Mammary epithelial cell (primary cell): ENCODE measurements at regions of chr7 and their contacts with region 1.

Region 1: GRCh38 chr7:16695621-16696237 is 49.7 kb downstream of the BZW2 start:
- DNase-seq: peak; percentile 47
- H3K4me3 ChIP-seq: no peak overlapping the region
- H3K27ac ChIP-seq: no peak overlapping the region
- H3K4me1 ChIP-seq: no peaks in the 10 kb centered on the region
- H3K27me3 ChIP-seq: no peaks in the 10 kb centered on the region
- CTCF ChIP-seq: peak; percentile 66 to 67

Region 2: DNA sequence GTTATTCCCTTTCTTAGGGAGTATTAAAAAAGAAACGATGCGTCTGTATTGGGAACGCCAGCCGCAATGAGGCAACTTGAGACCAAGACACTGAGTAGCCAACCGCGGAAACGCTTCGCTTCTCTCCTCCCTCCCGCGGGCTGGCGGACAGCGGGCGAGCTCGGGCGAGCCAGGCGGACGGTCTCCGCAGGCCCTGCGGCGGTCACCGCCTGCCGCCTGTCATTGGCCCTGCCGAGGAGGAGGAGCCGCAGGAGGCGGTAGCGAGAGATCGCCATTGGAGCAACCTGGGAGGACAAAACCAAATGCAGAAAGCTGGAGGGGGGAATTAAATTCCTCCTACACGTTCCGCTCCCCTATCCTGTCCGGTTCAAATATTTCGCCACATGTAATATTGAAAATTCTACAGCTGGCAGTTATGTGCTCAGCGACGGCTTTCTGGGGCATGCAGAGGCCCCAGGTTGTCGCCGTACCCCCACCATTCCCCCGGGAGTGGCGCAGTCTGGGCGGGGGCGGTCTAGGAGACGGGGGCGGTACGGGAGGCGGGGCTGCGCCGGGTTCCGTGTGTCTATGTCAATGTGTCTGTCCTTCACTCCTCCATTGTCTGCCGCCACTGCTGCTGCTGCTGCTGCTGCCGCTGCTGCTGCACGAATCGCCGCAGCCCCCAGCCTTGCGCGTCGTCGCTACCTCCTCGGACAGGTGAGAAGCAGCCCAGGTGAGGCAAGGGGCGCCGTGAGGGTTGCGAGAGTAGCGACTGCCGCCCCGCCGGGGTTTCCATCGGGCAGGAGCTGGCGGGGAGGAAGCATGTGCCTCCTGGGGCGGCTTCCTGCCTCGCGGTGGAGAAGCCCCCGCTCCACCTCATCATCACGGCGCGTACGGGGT is 49.9 kb before region 1 on chr7 and contains the starts of genes ANKMY2 and BZW2:
- CTCF ChIA-PET with region 1: no interaction called
- dilution Hi-C with region 1: no loop called
- in situ Hi-C with region 1: no loop called
- intact Hi-C with region 1: loop called (anchors 5 kb)
- DNase-seq: peak; percentile 96
- H3K4me3 ChIP-seq: peak within 1 kb of the TSS; percentile 96 to 100 (median 97)
- H3K27ac ChIP-seq: peak within 1 kb of the TSS; percentile 76
- H3K4me1 ChIP-seq: peaks cover 43% of the 10 kb centered on the region
- H3K27me3 ChIP-seq: no peaks in the 10 kb centered on the region
- CTCF ChIP-seq: no peak
- total RNA-seq, gene ANKMY2: 11.0 to 24.3 TPM
- total RNA-seq, gene BZW2: 66.2 to 75.0 TPM

Region 3: GRCh38 chr7:16753102-16753931 is 57.6 kb after region 1 on chr7 and contains the start of gene TSPAN13:
- CTCF ChIA-PET with region 1: no interaction called
- dilution Hi-C with region 1: no loop called
- in situ Hi-C with region 1: no loop called
- intact Hi-C with region 1: loop called (anchors 5 kb)
- DNase-seq: peak; percentile 98
- H3K4me3 ChIP-seq: peak within 1 kb of the TSS; percentile 53 to 88 (median 66)
- H3K27ac ChIP-seq: peak within 1 kb of the TSS; percentile 43
- H3K4me1 ChIP-seq: peaks cover 11% of the 10 kb centered on the region
- H3K27me3 ChIP-seq: no peaks in the 10 kb centered on the region
- CTCF ChIP-seq: no peak
- total RNA-seq, gene TSPAN13: 15.3 to 15.7 TPM

Region 4: GRCh38 chr7:16801111-16801542 is 105.4 kb after region 1 on chr7:
- CTCF ChIA-PET with region 1: no interaction called
- dilution Hi-C with region 1: no loop called
- in situ Hi-C with region 1: no loop called
- intact Hi-C with region 1: loop called (anchors 2 kb)
- DNase-seq: peak; percentile 90
- H3K4me3 ChIP-seq: no peak overlapping the region
- H3K27ac ChIP-seq: no peak overlapping the region
- H3K4me1 ChIP-seq: peaks cover 22% of the 10 kb centered on the region
- H3K27me3 ChIP-seq: no peaks in the 10 kb centered on the region
- CTCF ChIP-seq: peak; percentile 56 to 62

Region 5: DNA sequence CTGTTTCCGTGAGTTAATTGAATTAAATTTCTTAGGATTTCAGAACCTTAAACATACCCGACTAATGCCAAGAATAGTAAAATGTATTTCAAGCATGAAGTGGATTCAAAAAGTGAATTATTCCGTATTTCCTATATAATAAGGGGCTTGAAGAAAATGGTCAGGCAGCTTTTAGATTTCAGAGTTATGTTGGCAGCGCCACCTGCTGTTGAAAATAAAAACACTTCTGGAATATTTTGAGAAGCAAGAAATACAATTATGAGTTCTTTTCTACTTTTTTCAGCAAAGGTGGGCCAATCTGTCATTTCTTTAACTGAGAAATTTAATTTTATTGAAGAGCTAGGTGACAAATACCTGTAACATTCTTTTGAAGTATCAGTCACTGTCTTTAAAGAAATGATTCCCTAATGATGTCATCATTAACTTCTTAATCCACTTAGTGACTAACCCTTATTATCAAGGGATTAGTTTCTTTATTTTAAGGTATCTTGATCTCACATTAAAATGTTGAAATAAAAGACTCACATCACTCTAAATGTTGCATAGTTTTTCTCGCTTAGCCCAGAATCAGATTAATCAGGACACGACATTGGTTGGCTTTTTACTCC is 222.7 kb after region 1 on chr7:
- CTCF ChIA-PET with region 1: no interaction called
- dilution Hi-C with region 1: no loop called
- in situ Hi-C with region 1: loop called in 1 of 2 experiments (anchors 10 kb)
- intact Hi-C with region 1: loop called (anchors 1 kb)
- DNase-seq: peak; percentile 25
- H3K4me3 ChIP-seq: no peak overlapping the region
- H3K27ac ChIP-seq: no peak overlapping the region
- H3K4me1 ChIP-seq: peaks cover 36% of the 10 kb centered on the region
- H3K27me3 ChIP-seq: no peaks in the 10 kb centered on the region
- CTCF ChIP-seq: peak; percentile 51 to 63